AG04450 (cell line): ENCODE measurements at regions of chr1 and their contacts with region 1.

Region 1: GRCh38 chr1:86018283-86018923 is 138.2 kb downstream of the COL24A1 start:
- DNase-seq: no peak
- H3K4me3 ChIP-seq: no peak overlapping the region
- H3K27ac ChIP-seq: no peak overlapping the region
- H3K27me3 ChIP-seq: no peaks in the 10 kb centered on the region
- CTCF ChIP-seq: peak; percentile 85

Region 2: DNA sequence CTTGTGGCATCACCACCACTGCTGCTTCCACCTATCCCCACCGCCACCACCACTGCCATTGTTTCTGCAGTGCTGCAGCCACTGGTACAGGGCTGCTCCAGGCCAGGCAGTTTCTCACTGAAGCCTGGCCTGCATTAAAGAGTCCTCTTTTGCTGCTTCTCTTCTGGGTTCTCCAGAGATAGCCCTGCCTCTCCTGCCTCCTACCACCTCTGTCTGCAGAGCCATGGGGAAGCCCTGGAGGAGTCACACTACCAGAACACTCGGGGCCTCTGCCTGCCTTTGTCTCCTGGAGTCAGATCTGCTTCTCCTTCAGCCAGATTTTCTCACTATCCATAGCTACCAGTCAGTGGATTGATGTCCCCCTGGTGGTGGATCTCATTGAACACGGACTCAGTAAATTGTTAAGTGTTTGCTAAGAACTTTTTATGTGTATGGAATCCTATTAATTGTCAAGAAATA is 515.7 kb before region 1 on chr1:
- CTCF ChIA-PET with region 1: no interaction called
- POLR2A ChIA-PET with region 1: no interaction called
- DNase-seq: peak; percentile 59
- H3K4me3 ChIP-seq: no peak overlapping the region
- H3K27ac ChIP-seq: peak overlapping the region; percentile 63
- H3K27me3 ChIP-seq: no peaks in the 10 kb centered on the region
- CTCF ChIP-seq: peak; percentile 70

Region 3: DNA sequence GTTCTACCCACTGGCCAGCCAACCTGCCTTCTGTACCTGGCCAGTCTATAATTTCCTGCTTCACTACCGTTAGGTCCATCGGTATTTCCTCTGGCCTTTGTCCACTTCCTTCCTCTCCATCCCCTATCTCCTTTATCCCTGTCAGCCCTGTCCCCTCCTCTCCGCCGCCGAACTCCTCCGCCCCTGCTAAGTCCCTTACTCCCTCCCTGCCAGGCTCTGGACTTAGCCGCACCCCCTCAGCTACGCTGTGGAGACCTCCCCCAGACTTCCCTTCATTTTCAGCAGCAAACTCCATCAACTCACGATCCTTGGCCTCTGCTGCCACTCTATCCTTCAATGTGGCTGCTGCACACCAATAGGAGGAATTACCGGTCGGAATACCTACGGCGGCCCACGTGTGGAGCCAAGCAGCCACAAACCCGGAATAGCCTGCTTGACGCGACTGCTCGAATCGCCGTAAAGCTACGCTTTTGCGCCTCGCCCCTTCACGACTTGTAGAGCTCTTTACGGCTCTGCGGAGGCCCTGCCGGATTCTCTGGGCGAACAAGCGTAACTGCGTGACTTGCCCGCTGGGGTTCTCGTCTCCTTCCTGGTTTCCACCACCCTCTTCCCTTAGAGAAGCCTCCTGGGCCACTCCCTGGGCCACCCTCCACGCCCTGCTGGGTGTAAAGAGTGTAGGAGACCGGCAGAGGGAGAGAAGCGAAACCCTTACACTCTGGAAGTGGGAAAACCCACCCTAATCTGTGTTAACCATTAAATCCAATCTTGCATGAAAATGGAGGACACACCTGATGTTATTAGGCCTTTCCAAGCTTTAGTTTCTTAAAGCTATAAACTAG is 310.2 kb before region 1 on chr1 and contains the start of gene ZNHIT6:
- CTCF ChIA-PET with region 1: interaction called, 24 read pairs
- POLR2A ChIA-PET with region 1: no interaction called
- DNase-seq: peak; percentile 89
- H3K4me3 ChIP-seq: peak within 1 kb of the TSS; percentile 93
- H3K27ac ChIP-seq: peak within 1 kb of the TSS; percentile 84
- H3K27me3 ChIP-seq: no peaks in the 10 kb centered on the region
- CTCF ChIP-seq: peak; percentile 56
- polyA plus RNA-seq, gene ZNHIT6: 18.9 and 19.2 TPM in 2 replicates

Region 4: DNA sequence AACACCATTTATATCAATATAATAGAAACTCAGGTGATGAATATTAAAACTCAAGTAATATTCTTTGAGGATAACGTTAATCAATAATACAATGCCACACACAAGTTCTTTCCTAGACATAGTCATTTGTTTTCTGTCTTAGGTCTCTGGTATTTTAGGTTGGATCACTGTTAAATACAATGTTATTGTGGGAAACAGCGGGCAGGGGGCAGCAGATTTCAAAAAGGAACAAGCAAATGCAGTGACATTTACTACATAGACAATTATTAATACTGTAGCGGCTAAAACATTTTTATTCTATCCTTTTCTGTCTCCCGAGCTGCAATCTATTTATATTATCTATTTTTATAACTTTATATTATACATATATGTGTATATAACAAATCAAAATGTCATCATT is 123.8 kb before region 1 on chr1:
- CTCF ChIA-PET with region 1: interaction called, 40 read pairs
- POLR2A ChIA-PET with region 1: no interaction called
- DNase-seq: peak; percentile 15
- H3K4me3 ChIP-seq: no peak overlapping the region
- H3K27ac ChIP-seq: no peak overlapping the region
- H3K27me3 ChIP-seq: no peaks in the 10 kb centered on the region
- CTCF ChIP-seq: peak; percentile 70

Region 5: GRCh38 chr1:85998105-85998855 is 20.1 kb before region 1 on chr1:
- CTCF ChIA-PET with region 1: interaction called, 10 read pairs
- POLR2A ChIA-PET with region 1: no interaction called
- DNase-seq: no peak
- H3K4me3 ChIP-seq: no peak overlapping the region
- H3K27ac ChIP-seq: no peak overlapping the region
- H3K27me3 ChIP-seq: no peaks in the 10 kb centered on the region
- CTCF ChIP-seq: no peak